MCF 10A (cell line): ENCODE measurements at regions of chr5 and their contacts with region 1.

Region 1: GRCh38 chr5:151115274-151115905 is 34.6 kb upstream of the TNIP1 start:
- DNase-seq: peak; percentile 78
- H3K4me3 Mint-ChIP-seq: no peak overlapping the region
- H3K27ac Mint-ChIP-seq: no peak overlapping the region
- H3K4me1 Mint-ChIP-seq: no peaks in the 10 kb centered on the region
- H3K27me3 Mint-ChIP-seq: no peaks in the 10 kb centered on the region
- CTCF ChIP-seq: peak; percentile 99

Region 2: GRCh38 chr5:150801117-150801927 is 314.1 kb before region 1 on chr5:
- CTCF ChIA-PET with region 1: interaction called, 14 read pairs
- POLR2A ChIA-PET with region 1: no interaction called
- intact Hi-C with region 1: loop called (anchors 5 kb)
- DNase-seq: peak; percentile 87
- H3K4me3 Mint-ChIP-seq: peak overlapping the region; percentile 64
- H3K27ac Mint-ChIP-seq: peak overlapping the region; percentile 36
- H3K4me1 Mint-ChIP-seq: peaks cover 14% of the 10 kb centered on the region
- H3K27me3 Mint-ChIP-seq: no peaks in the 10 kb centered on the region
- CTCF ChIP-seq: peak; percentile 68

Region 3: DNA sequence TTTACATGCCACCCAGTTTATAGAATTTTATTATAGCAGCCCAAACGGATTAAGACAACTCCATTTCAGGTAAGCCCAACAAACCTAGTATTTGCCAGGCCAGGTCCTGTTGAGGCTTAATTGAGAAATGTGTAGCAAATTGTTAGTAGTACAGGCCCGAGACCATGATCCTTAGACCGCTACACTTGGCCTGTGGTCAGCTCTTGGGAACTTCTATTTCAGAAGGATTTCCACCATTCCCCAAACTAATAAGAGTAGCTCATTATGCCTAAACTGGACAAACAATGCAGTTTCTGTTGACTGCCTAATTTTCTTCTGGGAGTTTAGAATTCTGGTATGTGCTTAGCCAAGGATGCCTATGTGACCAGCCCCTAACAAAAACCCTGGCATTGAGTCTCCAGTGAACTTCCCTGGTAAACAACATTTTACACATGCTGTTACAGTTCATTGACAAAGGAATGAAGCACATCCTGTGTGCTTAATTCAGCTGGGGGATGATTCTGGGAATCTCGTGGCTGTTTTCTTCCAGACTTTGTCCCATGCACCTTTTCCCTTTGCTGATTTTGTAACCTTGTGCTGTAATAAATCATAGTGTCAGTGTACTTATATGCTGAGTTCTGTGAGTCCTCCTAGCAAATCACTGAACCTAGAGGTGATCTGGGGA is 100.6 kb before region 1 on chr5:
- CTCF ChIA-PET with region 1: interaction called, 63 read pairs
- POLR2A ChIA-PET with region 1: no interaction called
- intact Hi-C with region 1: no loop called
- DNase-seq: no peak
- H3K4me3 Mint-ChIP-seq: no peak overlapping the region
- H3K27ac Mint-ChIP-seq: no peak overlapping the region
- H3K4me1 Mint-ChIP-seq: no peaks in the 10 kb centered on the region
- H3K27me3 Mint-ChIP-seq: peaks cover 13% of the 10 kb centered on the region
- CTCF ChIP-seq: no peak

Region 4: GRCh38 chr5:151037561-151038411 is 77.6 kb before region 1 on chr5:
- CTCF ChIA-PET with region 1: interaction called, 75 read pairs
- POLR2A ChIA-PET with region 1: no interaction called
- intact Hi-C with region 1: loop called (anchors 1 kb)
- DNase-seq: no peak
- H3K4me3 Mint-ChIP-seq: no peak overlapping the region
- H3K27ac Mint-ChIP-seq: peak overlapping the region; percentile 75
- H3K4me1 Mint-ChIP-seq: peaks cover 7% of the 10 kb centered on the region
- H3K27me3 Mint-ChIP-seq: no peaks in the 10 kb centered on the region
- CTCF ChIP-seq: no peak

Region 5: DNA sequence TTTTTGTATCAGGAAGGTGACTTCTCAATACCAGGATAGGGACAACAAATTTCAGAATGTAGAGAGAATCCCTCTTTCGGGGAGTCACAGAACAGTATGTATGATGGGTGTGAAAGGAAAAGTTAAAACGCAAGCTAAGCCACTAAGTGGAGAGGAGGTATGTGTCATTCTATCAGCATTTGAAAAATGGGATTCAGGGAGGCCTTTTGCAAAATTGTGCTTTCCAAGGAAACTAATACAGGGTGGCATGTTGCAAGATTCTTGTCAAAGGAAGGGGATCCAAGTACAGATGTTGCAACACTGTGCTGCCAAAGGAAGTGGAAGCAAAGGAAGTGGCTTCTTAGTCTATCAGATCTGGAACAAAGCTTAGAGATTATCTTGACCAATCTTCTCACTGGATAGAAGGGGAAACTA is 21.9 kb before region 1 on chr5:
- CTCF ChIA-PET with region 1: interaction called, 72 read pairs
- POLR2A ChIA-PET with region 1: interaction called, 5 read pairs
- intact Hi-C with region 1: no loop called
- DNase-seq: peak; percentile 98
- H3K4me3 Mint-ChIP-seq: peak overlapping the region; percentile 28
- H3K27ac Mint-ChIP-seq: peak overlapping the region; percentile 76
- H3K4me1 Mint-ChIP-seq: peaks cover 43% of the 10 kb centered on the region
- H3K27me3 Mint-ChIP-seq: no peaks in the 10 kb centered on the region
- CTCF ChIP-seq: no peak

Region 6: GRCh38 chr5:151141535-151141934 is 26.1 kb after region 1 on chr5:
- CTCF ChIA-PET with region 1: interaction called, 43 read pairs
- POLR2A ChIA-PET with region 1: no interaction called
- intact Hi-C with region 1: no loop called
- DNase-seq: no peak
- H3K4me3 Mint-ChIP-seq: no peak overlapping the region
- H3K27ac Mint-ChIP-seq: no peak overlapping the region
- H3K4me1 Mint-ChIP-seq: peaks cover 7% of the 10 kb centered on the region
- H3K27me3 Mint-ChIP-seq: no peaks in the 10 kb centered on the region
- CTCF ChIP-seq: no peak

Region 7: DNA sequence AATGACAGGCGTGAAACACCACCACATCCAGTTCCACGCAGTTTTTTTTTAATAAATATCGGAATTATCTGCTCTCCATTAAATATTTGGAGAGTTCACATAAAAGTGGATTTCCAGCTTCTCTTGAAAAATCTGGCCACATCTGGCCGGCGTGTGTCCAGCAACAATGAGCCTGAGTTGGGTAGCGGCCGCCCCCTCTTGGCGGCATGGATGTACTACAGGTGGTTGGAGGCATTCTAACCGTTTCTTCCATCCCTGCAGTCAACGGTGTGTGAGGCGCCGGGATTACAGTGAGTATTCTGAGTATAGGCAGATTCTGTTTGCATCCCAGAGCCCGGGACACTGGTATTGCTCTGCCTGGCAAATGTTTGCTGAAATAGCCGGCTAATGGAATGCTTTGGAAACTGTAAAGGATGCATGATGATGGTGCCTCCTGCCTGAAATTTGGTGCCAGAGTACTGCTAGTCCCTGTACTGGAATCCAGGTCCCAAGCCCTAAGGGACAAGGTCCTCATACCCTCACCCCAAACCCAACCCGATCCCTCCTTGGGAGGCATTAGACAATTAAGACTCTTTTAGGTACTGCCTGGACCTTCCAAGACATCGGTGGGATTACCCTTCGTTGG is 124.0 kb after region 1 on chr5:
- CTCF ChIA-PET with region 1: interaction called, 338 read pairs
- POLR2A ChIA-PET with region 1: no interaction called
- intact Hi-C with region 1: no loop called
- DNase-seq: peak; percentile 83
- H3K4me3 Mint-ChIP-seq: no peak overlapping the region
- H3K27ac Mint-ChIP-seq: peak overlapping the region; percentile 20
- H3K4me1 Mint-ChIP-seq: peaks cover 4% of the 10 kb centered on the region
- H3K27me3 Mint-ChIP-seq: no peaks in the 10 kb centered on the region
- CTCF ChIP-seq: peak; percentile 98

Region 8: DNA sequence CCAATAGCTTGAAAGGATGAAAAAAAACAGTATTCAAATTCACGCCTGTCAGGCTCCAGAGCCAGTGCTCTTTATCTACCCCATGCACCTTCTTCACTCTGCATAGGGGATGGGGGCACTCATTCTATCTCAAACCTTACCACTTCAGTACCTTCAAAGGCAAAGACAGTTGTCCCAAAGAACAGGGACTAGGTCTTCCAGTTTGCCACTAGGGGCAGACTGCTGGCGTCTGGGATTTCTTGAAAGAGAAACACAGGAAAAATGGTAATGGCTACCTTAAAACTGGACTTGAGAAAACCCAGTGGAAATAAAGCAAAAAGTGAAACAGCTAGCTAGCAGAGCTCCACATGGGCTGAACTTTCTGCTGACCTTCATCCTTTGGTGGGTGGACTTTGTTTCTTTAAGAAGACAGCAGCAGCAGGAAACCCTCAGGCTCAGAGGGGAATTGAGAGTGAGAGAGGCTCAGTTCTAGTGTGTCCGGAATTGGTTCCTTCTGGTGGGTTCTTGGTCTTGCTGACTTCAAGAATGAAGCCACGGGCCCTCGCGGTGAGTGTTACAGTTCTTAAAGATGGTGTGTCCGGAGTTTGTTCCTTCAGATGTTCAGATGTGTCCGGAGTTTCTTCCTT is 291.0 kb after region 1 on chr5:
- CTCF ChIA-PET with region 1: no interaction called
- POLR2A ChIA-PET with region 1: no interaction called
- intact Hi-C with region 1: no loop called
- DNase-seq: peak; percentile 42
- H3K4me3 Mint-ChIP-seq: no peak overlapping the region
- H3K27ac Mint-ChIP-seq: no peak overlapping the region
- H3K4me1 Mint-ChIP-seq: no peaks in the 10 kb centered on the region
- H3K27me3 Mint-ChIP-seq: peaks cover 51% of the 10 kb centered on the region
- CTCF ChIP-seq: peak; percentile 32